H1 (cell line): ENCODE measurements at regions of chr3 and their contacts with region 1.

Region 1: DNA sequence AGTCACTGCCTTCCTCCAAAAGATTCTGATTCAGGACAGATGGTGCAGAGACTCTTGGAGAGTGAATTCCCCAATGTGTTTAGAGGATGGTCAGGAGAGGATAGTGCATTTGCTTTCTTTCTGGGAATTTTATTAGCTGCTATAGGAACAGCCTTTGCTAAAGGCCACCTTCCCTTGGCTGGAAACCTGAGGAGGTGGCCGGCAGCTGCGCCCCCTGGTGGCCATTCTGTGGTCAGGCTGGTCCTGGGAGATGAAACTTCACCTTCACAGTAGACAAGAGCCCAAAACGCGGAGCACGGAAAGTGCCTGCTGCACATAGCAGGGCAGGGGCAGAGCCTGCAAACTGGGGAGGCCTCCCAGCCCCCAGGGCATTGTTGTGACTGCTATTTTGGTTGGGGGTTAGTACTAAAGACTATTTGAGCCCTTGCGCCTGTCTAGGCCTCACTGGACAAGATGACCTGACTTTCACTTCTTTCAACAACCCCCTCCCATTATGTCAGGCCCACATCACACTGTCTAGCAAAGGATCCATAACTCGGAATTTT is 34.3 kb downstream of the SEC22C start:
- DNase-seq: peak; percentile 50 to 87
- H3K4me3 ChIP-seq: no peak overlapping the region
- H3K27ac ChIP-seq: no peak overlapping the region
- H3K4me1 ChIP-seq: no peaks in the 10 kb centered on the region
- H3K27me3 ChIP-seq: no peaks in the 10 kb centered on the region
- CTCF ChIP-seq: peak; percentile 90 to 96 (median 91)
- EP300 ChIP-seq: no peak
- POLR2A ChIP-seq: no peak
- RAD21 ChIP-seq: peak; percentile 68 to 72

Region 2: DNA sequence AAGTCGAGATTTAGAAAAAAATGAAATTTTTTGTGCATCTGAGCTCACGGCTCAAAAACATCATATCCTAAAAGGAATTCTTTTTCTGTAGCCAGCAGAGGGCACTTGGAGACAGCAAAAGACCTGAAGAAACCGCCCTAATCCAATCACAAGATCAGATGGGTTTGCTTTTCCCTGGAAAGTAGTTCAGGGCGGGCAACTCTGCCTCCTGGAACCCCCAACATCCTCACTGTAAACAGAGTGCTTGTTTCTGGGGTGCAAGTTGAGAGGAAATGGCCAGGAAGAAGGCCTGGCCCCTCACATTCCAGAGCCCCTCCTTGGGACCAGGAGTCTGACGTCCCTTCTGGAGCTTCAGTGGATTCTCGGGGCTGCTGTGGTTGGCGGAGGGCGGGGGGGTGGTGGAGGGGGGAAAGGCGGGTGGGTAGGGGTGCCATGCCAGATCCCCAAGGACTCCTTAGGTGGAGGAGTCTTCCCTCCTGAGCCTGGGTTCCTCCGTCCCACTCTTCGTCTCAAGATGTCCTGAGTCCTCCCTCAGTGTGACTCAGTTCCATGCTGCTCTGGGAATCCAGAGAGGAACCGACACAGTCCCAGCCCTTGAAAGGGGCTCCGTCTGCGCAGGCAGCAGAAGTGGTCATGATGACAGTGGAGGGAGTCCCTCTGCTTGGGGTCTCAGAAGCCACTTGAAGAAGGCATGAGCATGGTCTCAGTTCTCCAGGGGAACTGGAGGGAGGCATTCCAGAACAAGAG is 317.4 kb before region 1 on chr3:
- CTCF ChIA-PET with region 1: interaction called, 69 read pairs
- POLR2A ChIA-PET with region 1: interaction called, 5 read pairs
- DNase-seq: no peak
- H3K4me3 ChIP-seq: no peak overlapping the region
- H3K27ac ChIP-seq: no peak overlapping the region
- H3K4me1 ChIP-seq: 0 out of 7 replicates have a peak, but pooled peaks cover 0 to 4% (median 0%) of the 10 kb centered on the region in 4 experiments
- H3K27me3 ChIP-seq: no peaks in the 10 kb centered on the region; a peak in 1 of 7 replicates
- CTCF ChIP-seq: peak in 2 of 3 experiments; percentile 61 to 67; a peak in 3 of 4 replicates
- EP300 ChIP-seq: no peak
- POLR2A ChIP-seq: no peak
- RAD21 ChIP-seq: peak; percentile 86 to 88

Region 3: DNA sequence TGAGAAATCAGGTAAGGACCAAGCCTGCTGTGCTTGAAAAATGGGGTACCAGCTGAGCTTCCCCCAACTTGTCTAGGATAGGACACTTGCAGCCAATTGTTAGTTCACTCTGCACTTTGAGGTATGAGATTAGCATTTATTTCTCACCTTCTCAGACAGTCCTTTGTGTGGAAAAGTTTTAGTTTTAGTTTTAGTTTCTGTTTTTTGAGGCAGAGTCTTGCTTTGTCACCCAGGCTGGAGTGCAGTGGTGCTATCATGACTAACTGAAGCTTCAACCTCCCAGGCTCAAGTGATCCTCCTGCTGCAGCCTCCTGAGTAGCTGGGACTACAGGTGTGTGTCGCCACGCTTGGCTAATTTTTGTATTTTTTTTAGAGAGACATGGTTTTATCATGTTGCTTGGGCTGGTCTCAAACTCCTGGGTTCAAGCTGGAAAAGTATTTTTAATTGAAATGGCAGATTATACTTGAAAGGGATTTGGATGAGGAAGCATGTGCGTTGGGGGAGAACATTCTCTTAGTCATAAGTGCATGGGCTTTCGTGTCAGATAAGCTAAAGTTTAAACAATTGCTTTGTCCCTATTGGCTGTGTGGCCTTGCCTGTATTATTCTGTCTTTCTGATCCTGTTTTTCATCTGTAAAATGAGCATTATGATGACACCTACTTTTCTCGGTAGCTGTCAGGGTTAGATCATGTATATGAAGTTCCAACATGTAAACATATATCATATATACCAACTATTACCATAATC is 256.3 kb before region 1 on chr3:
- CTCF ChIA-PET with region 1: no interaction called
- POLR2A ChIA-PET with region 1: no interaction called
- DNase-seq: no peak
- H3K4me3 ChIP-seq: no peak overlapping the region
- H3K27ac ChIP-seq: no peak overlapping the region
- H3K4me1 ChIP-seq: no peaks in the 10 kb centered on the region
- H3K27me3 ChIP-seq: no peaks in the 10 kb centered on the region
- CTCF ChIP-seq: no peak
- EP300 ChIP-seq: no peak
- POLR2A ChIP-seq: no peak
- RAD21 ChIP-seq: no peak

Region 4: DNA sequence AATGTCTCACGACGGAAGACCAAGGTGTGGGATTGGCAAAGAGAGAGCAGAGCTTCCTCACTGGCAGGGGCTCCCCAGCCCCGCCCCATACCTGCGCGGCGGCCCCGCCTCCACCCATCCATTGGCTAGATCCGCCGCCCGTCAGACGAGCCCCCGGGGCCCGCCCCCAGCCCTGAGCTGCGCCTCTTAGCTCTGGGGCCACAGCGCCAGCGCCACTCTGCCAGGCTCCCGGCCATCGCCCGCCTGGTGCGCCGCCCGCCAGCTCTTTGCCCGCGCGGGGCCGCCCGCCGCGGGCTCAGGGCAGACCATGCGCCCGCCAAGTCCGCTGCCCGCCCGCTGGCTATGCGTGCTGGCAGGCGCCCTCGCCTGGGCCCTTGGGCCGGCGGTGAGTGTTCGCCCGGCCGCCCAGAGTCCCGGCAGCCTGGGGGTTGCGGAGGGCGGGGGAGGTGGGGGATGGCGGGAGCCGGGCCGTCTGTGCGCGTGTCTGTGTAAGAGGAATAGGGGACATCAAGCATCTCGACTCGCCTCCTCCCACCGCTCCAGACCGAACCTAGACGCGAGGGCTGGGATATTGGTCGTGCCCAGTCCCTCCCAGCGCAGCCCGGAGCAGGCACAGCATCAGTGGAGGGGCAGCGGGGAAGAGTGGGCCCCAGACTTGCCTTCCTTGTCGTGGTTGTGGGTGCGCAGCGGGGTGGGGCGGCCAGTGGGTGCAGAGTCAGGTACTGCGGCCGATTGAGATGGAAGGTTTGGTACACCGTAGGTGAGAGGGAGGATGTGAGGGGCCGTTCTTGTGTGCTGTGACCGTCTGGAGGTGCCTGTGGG is 44.8 kb before region 1 on chr3 and contains the start of gene VIPR1:
- CTCF ChIA-PET with region 1: interaction called, 458 read pairs
- POLR2A ChIA-PET with region 1: interaction called, 5 read pairs
- DNase-seq: peak; percentile 73 to 99
- H3K4me3 ChIP-seq: peak within 1 kb of the TSS; percentile 50 to 77 (median 68)
- H3K27ac ChIP-seq: no peak within 1 kb of the TSS
- H3K4me1 ChIP-seq: peaks cover 0 to 12% (median 2%) of the 10 kb centered on the region in 4 experiments; a peak in 3 of 7 replicates
- H3K27me3 ChIP-seq: peaks cover 0 to 52% (median 35%) of the 10 kb centered on the region in 4 experiments; a peak in 6 of 7 replicates
- CTCF ChIP-seq: no peak
- EP300 ChIP-seq: no peak
- POLR2A ChIP-seq: peak in 1 of 2 experiments; percentile 65; a peak in 2 of 3 replicates
- RAD21 ChIP-seq: 0 out of 4 replicates have a peak, but pooled peaks of 1 of the 2 experiments have one; percentile 2
- total RNA-seq, gene VIPR1: 10.1 and 11.3 TPM in 2 replicates

Region 5: GRCh38 chr3:42518800-42519567 is 28.5 kb before region 1 on chr3:
- CTCF ChIA-PET with region 1: interaction called, 458 read pairs
- POLR2A ChIA-PET with region 1: no interaction called
- DNase-seq: peak in 1 of 2 experiments; percentile 85
- H3K4me3 ChIP-seq: no peak overlapping the region
- H3K27ac ChIP-seq: no peak overlapping the region
- H3K4me1 ChIP-seq: no peaks in the 10 kb centered on the region
- H3K27me3 ChIP-seq: no peaks in the 10 kb centered on the region
- CTCF ChIP-seq: peak; percentile 65 to 80 (median 69)
- EP300 ChIP-seq: no peak
- POLR2A ChIP-seq: no peak
- RAD21 ChIP-seq: peak; percentile 60 to 71

Region 6: GRCh38 chr3:42562047-42562907 is 14.8 kb after region 1 on chr3:
- CTCF ChIA-PET with region 1: interaction called, 11 read pairs
- POLR2A ChIA-PET with region 1: interaction called, 8 read pairs
- DNase-seq: no peak
- H3K4me3 ChIP-seq: no peak overlapping the region
- H3K27ac ChIP-seq: no peak overlapping the region
- H3K4me1 ChIP-seq: no peaks in the 10 kb centered on the region
- H3K27me3 ChIP-seq: no peaks in the 10 kb centered on the region
- CTCF ChIP-seq: no peak
- EP300 ChIP-seq: no peak
- POLR2A ChIP-seq: no peak
- RAD21 ChIP-seq: no peak; a peak in 1 of 4 replicates

Region 7: GRCh38 chr3:42839616-42840015 is 292.1 kb after region 1 on chr3:
- CTCF ChIA-PET with region 1: no interaction called
- POLR2A ChIA-PET with region 1: no interaction called
- DNase-seq: no peak
- H3K4me3 ChIP-seq: no peak overlapping the region
- H3K27ac ChIP-seq: no peak overlapping the region
- H3K4me1 ChIP-seq: peaks cover 0 to 8% (median 4%) of the 10 kb centered on the region in 4 experiments; a peak in 6 of 7 replicates
- H3K27me3 ChIP-seq: no peaks in the 10 kb centered on the region
- CTCF ChIP-seq: peak in 2 of 3 experiments; percentile 71 to 96; a peak in 3 of 4 replicates
- EP300 ChIP-seq: no peak
- POLR2A ChIP-seq: no peak
- RAD21 ChIP-seq: peak; percentile 60 to 71